Common myeloid progenitor, CD34-positive (primary cell): ENCODE measurements at regions of chr2 and their contacts with region 1.

Region 1: GRCh38 chr2:38771632-38772031 is 6.4 kb upstream of the GEMIN6 start:
- DNase-seq: no peak
- H3K4me3 ChIP-seq: no peak overlapping the region
- H3K27ac ChIP-seq: no peak overlapping the region
- H3K4me1 ChIP-seq: no peaks in the 10 kb centered on the region
- H3K27me3 ChIP-seq: peaks cover 0 to 10% (median 3%) of the 10 kb centered on the region in 5 experiments

Region 2: GRCh38 chr2:38750891-38751595 is 20.6 kb before region 1 on chr2 and contains the start of gene SRSF7:
- CTCF ChIA-PET with region 1: interaction called, 4 read pairs
- POLR2A ChIA-PET with region 1: interaction called, 11 read pairs
- DNase-seq: peak; percentile 99
- H3K4me3 ChIP-seq: peak within 1 kb of the TSS; percentile 88 to 100 (median 99)
- H3K27ac ChIP-seq: peak within 1 kb of the TSS; percentile 93 to 97
- H3K4me1 ChIP-seq: peaks cover 10 to 42% (median 29%) of the 10 kb centered on the region in 4 experiments
- H3K27me3 ChIP-seq: no peaks in the 10 kb centered on the region

Region 3: DNA sequence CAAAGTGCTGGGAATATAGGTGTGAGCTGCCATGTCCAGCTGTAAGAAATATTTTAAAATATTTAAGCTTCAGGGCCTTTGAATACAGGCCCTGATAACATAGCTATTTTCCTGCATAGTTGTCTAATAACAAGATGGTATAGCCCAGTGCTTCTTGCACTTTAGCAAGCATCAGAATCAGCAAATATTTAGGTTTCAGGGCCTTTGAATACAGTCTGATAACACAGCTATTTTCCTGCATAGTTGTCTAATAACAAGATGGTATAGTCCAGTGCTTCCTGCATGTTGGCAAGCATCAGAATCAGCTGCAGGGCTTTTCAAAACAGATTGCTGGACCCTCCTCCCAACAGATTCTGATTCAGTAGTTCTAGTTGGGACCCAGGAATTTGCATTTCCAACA is 12.0 kb after region 1 on chr2:
- CTCF ChIA-PET with region 1: no interaction called
- POLR2A ChIA-PET with region 1: no interaction called
- DNase-seq: no peak
- H3K4me3 ChIP-seq: no peak overlapping the region
- H3K27ac ChIP-seq: no peak overlapping the region
- H3K4me1 ChIP-seq: peaks cover under 1 to 7% (median 6%) of the 10 kb centered on the region in 4 experiments
- H3K27me3 ChIP-seq: no peaks in the 10 kb centered on the region